Activated naive CD8-positive, alpha-beta T cell treated with anti-CD3 and anti-CD28 coated beads, Interleukin-2, amount 10 ng/mL, durations not matched to agents 7 days and 5 days (primary cell): ENCODE measurements at regions of chr17 and their contacts with region 1.

Region 1: GRCh38 chr17:77331301-77331864 is 190.6 kb downstream of the SEC14L1 start:
- DNase-seq: peak; percentile 96
- ATAC-seq: peak; percentile 92
- H3K4me3 Mint-ChIP-seq: peak overlapping the region; percentile 86
- H3K27ac Mint-ChIP-seq: peak overlapping the region; percentile 95
- H3K4me1 Mint-ChIP-seq: peaks cover 36% of the 10 kb centered on the region
- H3K27me3 Mint-ChIP-seq: no peaks in the 10 kb centered on the region

Region 2: GRCh38 chr17:77391668-77392375 is 60.4 kb after region 1 on chr17:
- POLR2A ChIA-PET with region 1: interaction called, 15 read pairs
- DNase-seq: no peak
- ATAC-seq: peak; percentile 58
- H3K4me3 Mint-ChIP-seq: peak overlapping the region; percentile 56
- H3K27ac Mint-ChIP-seq: peak overlapping the region; percentile 81
- H3K4me1 Mint-ChIP-seq: peaks cover 69% of the 10 kb centered on the region
- H3K27me3 Mint-ChIP-seq: no peaks in the 10 kb centered on the region